ENCODE measurements at regions of chr20 and their contacts with region 1.

Region 1: GRCh38 chr20:62793912-62794724 is 2.2 kb upstream of the MRGBP start:
- H3K4me3 ChIP-seq: peak overlapping the region; percentile 37
- H3K27ac ChIP-seq: 0 out of 2 replicates have a peak overlapping the region, but pooled peaks have one; percentile 35
- H3K4me1 ChIP-seq: no peaks in the 10 kb centered on the region
- CTCF ChIP-seq: no peak

Region 2: GRCh38 chr20:62616728-62617621 is 177.1 kb before region 1 on chr20:
- CTCF ChIA-PET with region 1: interaction called, 10 read pairs
- POLR2A ChIA-PET with region 1: no interaction called
- H3K4me3 ChIP-seq: no peak overlapping the region
- H3K27ac ChIP-seq: no peak overlapping the region
- H3K4me1 ChIP-seq: no peaks in the 10 kb centered on the region
- CTCF ChIP-seq: peak; percentile 91

Region 3: GRCh38 chr20:62668441-62669027 is 125.6 kb before region 1 on chr20:
- CTCF ChIA-PET with region 1: interaction called, 38 read pairs
- POLR2A ChIA-PET with region 1: interaction called, 5 read pairs
- H3K4me3 ChIP-seq: no peak overlapping the region
- H3K27ac ChIP-seq: no peak overlapping the region
- H3K4me1 ChIP-seq: no peaks in the 10 kb centered on the region
- CTCF ChIP-seq: peak; percentile 85

Region 4: DNA sequence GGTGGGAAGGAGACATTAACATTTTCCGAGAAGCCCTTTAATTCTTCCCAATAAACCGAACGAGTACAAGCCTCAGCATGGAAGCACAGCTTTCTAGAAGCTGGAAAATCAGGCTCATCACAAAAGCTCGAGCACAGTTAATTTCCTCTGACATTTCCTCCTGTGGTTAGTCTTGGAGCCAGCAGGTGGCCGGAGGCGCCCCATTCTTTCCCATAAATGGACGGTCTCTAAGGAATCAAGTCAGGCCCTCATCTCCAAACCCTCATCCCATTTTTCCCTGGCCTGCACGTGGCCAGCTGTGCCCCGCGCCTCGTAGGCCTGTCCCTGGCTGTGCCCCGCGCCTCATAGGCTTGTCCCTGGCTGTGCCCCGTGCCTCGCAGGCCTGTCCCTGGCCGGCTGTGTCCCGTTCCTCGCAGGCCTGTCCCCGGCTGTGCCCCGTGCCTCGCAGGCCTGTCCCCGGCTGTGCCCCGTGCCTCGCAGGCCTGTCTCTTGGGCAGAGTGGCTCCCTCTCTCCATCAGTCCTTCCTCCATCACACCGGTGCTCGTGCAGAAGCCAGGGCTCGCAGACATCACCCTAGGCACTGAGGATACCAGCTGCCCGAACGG is 105.2 kb before region 1 on chr20:
- CTCF ChIA-PET with region 1: interaction called, 12 read pairs
- POLR2A ChIA-PET with region 1: interaction called, 5 read pairs
- H3K4me3 ChIP-seq: no peak overlapping the region
- H3K27ac ChIP-seq: no peak overlapping the region
- H3K4me1 ChIP-seq: peaks cover 5% of the 10 kb centered on the region
- CTCF ChIP-seq: no peak

Region 5: DNA sequence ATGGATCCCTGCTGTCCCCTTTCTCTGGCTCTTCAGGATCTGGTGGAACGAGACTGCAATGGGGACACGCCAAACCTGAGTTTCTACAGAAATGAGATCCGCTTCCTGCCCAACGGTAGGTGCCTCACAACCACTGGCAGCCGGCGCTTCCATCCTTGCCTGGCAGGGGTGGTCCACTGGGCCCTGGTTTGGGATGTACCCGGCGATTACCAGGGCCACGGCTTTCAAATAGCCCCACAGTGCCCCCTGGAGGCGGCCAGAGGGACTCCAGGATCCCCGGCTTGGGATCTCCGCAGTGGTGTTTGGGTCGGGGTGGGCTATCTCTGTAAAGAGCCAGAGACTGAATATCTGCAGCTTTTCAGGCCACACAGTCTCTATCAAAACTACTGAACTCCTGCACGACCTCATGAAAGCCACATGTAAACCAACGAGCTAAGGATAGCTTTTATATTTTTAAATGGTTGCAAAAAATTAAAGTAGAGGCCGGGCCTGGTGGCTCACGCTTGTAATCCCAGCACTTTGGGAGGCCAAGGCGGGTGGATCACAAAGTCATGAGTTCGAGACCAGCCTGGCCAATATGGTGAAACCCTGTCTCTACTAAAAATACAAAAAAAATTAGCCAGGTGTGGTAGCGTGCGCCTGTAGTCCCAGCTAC is 14.2 kb after region 1 on chr20:
- CTCF ChIA-PET with region 1: interaction called, 18 read pairs
- POLR2A ChIA-PET with region 1: interaction called, 22 read pairs
- H3K4me3 ChIP-seq: no peak overlapping the region
- H3K27ac ChIP-seq: no peak overlapping the region
- H3K4me1 ChIP-seq: no peaks in the 10 kb centered on the region
- CTCF ChIP-seq: peak; percentile 65

Region 6: GRCh38 chr20:62895539-62895938 is 101.4 kb after region 1 on chr20:
- CTCF ChIA-PET with region 1: no interaction called
- POLR2A ChIA-PET with region 1: no interaction called
- H3K4me3 ChIP-seq: no peak overlapping the region
- H3K27ac ChIP-seq: no peak overlapping the region
- H3K4me1 ChIP-seq: no peaks in the 10 kb centered on the region
- CTCF ChIP-seq: no peak